CD4-positive, alpha-beta memory T cell (primary cell): ENCODE measurements at regions of chr10 and their contacts with region 1.

Region 1: GRCh38 chr10:8331883-8332729 is 277.6 kb downstream of the GATA3 start:
- DNase-seq: peak; percentile 94 to 97 (median 95)
- H3K4me3 ChIP-seq: peak overlapping the region; percentile 67
- H3K4me3 Mint-ChIP-seq: peak overlapping the region; percentile 84 to 94 (median 90)
- H3K27ac ChIP-seq: peak overlapping the region; percentile 78
- H3K27ac Mint-ChIP-seq: peak overlapping the region; percentile 91 to 99 (median 98)
- H3K4me1 ChIP-seq: peaks cover 32% of the 10 kb centered on the region
- H3K4me1 Mint-ChIP-seq: peaks cover 27 to 69% (median 42%) of the 10 kb centered on the region in 4 donors
- H3K27me3 ChIP-seq: no peaks in the 10 kb centered on the region
- H3K27me3 Mint-ChIP-seq: no peaks in the 10 kb centered on the region

Region 2: DNA sequence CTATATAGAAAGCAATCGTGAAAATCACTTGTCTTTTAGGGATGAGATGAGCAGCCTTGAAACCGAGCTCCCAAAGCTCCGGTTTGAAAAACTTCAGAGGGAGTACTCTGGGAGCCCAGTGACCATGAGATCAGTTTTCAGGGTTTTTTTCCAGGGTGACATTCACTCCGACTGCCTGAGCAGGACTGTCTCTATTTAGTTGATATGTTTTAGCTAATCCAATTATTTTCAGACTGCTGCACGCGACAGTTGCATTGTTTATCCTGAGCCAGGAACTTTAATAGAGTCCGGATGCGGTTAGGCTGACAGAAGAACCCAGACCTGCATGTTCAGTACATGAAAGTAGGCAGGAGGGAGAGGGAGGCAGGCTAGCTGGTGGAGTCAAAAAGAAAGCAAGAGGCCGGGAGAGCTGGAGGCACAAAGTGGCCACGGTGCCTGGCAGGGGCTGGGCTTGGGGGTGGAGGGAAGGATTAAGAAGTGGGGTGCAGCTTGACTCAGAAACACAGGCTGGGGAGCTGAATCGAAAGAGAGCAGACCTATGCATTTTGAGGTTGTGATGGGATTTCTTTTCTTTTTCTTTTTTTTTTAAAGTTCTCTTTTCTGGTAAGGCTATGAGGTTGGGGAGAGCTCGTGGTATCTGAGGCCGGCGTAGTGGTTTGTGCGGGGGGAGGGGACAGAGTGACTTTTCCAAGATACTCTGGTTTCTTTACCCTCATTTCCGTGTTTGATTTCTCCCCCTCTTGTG is 272.0 kb before region 1 on chr10:
- CTCF ChIA-PET with region 1: interaction called, 37 read pairs
- POLR2A ChIA-PET with region 1: interaction called, 145 read pairs
- intact Hi-C with region 1: no loop called
- DNase-seq: peak; percentile 73 to 84 (median 76)
- H3K4me3 ChIP-seq: peak overlapping the region; percentile 57 to 58
- H3K4me3 Mint-ChIP-seq: peak overlapping the region; percentile 94 to 100 (median 98)
- H3K27ac ChIP-seq: peak overlapping the region; percentile 83
- H3K27ac Mint-ChIP-seq: peak overlapping the region; percentile 93 to 99 (median 97)
- H3K4me1 ChIP-seq: peaks cover 77% of the 10 kb centered on the region
- H3K4me1 Mint-ChIP-seq: peaks cover 46 to 86% (median 70%) of the 10 kb centered on the region in 4 donors
- H3K27me3 ChIP-seq: no peaks in the 10 kb centered on the region
- H3K27me3 Mint-ChIP-seq: no peaks in the 10 kb centered on the region

Region 3: DNA sequence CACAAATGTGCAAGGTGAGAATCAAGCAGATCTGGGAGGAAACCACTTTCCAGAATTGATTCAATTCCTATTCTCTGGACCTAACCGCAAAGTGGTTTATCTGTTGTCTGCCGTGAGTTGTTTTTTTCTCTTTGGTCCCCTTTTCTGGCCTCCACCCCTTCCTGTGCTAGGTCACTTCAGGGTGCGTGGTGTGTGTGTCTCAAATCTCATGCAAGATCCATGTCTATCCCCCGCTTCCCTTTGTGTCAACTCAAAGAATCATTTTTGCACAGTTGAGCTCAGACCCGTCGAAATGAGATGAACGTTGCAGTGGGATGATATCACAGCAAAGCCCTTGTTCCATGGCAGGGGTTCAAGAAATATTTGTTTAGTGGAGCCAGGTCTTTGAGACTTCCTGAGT is 93.1 kb before region 1 on chr10:
- CTCF ChIA-PET with region 1: interaction called, 4 read pairs
- POLR2A ChIA-PET with region 1: interaction called, 15 read pairs
- intact Hi-C with region 1: no loop called
- DNase-seq: peak in 4 of 5 donors; percentile 13 to 33 (median 22)
- H3K4me3 ChIP-seq: peak overlapping the region in 1 of 2 donors; percentile 17
- H3K4me3 Mint-ChIP-seq: peak overlapping the region; percentile 39 to 79 (median 64)
- H3K27ac ChIP-seq: peak overlapping the region; percentile 13
- H3K27ac Mint-ChIP-seq: peak overlapping the region; percentile 44 to 89 (median 72)
- H3K4me1 ChIP-seq: peaks cover 48% of the 10 kb centered on the region
- H3K4me1 Mint-ChIP-seq: peaks cover 35 to 77% (median 56%) of the 10 kb centered on the region in 4 donors
- H3K27me3 ChIP-seq: no peaks in the 10 kb centered on the region
- H3K27me3 Mint-ChIP-seq: no peaks in the 10 kb centered on the region

Region 4: GRCh38 chr10:8365935-8366911 is 34.1 kb after region 1 on chr10:
- CTCF ChIA-PET with region 1: no interaction called
- POLR2A ChIA-PET with region 1: interaction called, 14 read pairs
- intact Hi-C with region 1: loop called (anchors 2 kb)
- DNase-seq: peak; percentile 60 to 86 (median 71)
- H3K4me3 ChIP-seq: no peak overlapping the region
- H3K4me3 Mint-ChIP-seq: peak overlapping the region; percentile 17 to 79 (median 55)
- H3K27ac ChIP-seq: peak overlapping the region; percentile 56
- H3K27ac Mint-ChIP-seq: peak overlapping the region; percentile 75 to 96 (median 92)
- H3K4me1 ChIP-seq: peaks cover 43% of the 10 kb centered on the region
- H3K4me1 Mint-ChIP-seq: peaks cover 44 to 67% (median 52%) of the 10 kb centered on the region in 4 donors
- H3K27me3 ChIP-seq: no peaks in the 10 kb centered on the region
- H3K27me3 Mint-ChIP-seq: no peaks in the 10 kb centered on the region

Region 5: DNA sequence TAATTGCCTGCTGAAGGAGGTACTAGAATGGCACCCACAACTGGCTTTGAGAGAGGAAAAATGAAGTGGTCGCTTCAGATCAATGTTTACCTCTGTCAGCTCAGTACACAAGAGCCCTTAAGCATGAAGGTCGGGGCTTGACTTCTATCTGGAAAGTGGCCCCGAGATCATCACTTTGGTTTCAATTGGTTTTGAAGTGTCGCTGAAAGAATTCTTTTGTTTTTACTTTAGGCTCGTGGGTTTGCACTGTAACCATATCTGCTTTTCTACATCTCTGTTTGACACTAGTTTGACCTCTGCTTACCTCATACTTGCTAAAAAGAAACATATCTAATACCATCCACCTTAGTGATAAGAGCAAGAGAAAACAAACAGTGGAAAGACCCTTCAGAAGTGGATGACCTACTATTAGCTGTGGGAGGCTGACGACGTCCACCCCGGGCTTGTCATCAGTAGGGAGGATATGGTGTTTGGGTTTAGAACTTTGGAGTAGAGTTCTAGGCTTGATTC is 84.1 kb after region 1 on chr10:
- CTCF ChIA-PET with region 1: interaction called, 5 read pairs
- POLR2A ChIA-PET with region 1: interaction called, 31 read pairs
- intact Hi-C with region 1: no loop called
- DNase-seq: peak; percentile 73 to 89 (median 84)
- H3K4me3 ChIP-seq: no peak overlapping the region
- H3K4me3 Mint-ChIP-seq: peak overlapping the region in 7 of 8 donors; percentile 7 to 81 (median 51)
- H3K27ac ChIP-seq: peak overlapping the region; percentile 90
- H3K27ac Mint-ChIP-seq: peak overlapping the region; percentile 97 to 100 (median 99)
- H3K4me1 ChIP-seq: peaks cover 31% of the 10 kb centered on the region
- H3K4me1 Mint-ChIP-seq: peaks cover 30 to 58% (median 39%) of the 10 kb centered on the region in 4 donors
- H3K27me3 ChIP-seq: no peaks in the 10 kb centered on the region
- H3K27me3 Mint-ChIP-seq: no peaks in the 10 kb centered on the region

Region 6: GRCh38 chr10:8444630-8445029 is 112.5 kb after region 1 on chr10:
- CTCF ChIA-PET with region 1: interaction called, 9 read pairs
- POLR2A ChIA-PET with region 1: interaction called, 11 read pairs
- intact Hi-C with region 1: no loop called
- DNase-seq: peak in 4 of 5 donors; percentile 21 to 35 (median 26)
- H3K4me3 ChIP-seq: no peak overlapping the region
- H3K4me3 Mint-ChIP-seq: no peak overlapping the region
- H3K27ac ChIP-seq: no peak overlapping the region
- H3K27ac Mint-ChIP-seq: peak overlapping the region in 3 of 7 donors; percentile 12 to 65 (median 24)
- H3K4me1 ChIP-seq: peaks cover 6% of the 10 kb centered on the region
- H3K4me1 Mint-ChIP-seq: peaks cover 5 to 19% (median 12%) of the 10 kb centered on the region in 4 donors
- H3K27me3 ChIP-seq: no peaks in the 10 kb centered on the region
- H3K27me3 Mint-ChIP-seq: no peaks in the 10 kb centered on the region

Region 7: DNA sequence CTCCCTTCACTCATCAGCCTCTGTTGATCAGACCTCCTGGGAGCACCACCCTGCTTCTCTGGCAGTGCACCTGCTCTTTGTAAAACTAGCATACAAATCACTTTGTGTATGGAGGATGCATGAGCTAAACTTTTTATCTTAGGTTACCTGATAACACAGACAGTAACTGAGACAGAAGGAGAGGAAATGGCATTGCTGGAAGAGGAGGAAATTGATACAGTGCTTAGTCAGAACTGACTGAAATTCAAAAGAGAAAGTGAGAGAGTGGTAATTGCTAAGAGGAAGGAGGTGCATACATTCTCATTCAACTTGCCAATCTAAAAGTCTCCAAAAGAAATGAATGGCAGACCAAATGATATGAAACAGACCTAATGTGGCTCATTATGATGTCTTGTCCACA is 843.1 kb after region 1 on chr10:
- CTCF ChIA-PET with region 1: no interaction called
- POLR2A ChIA-PET with region 1: no interaction called
- intact Hi-C with region 1: no loop called
- DNase-seq: peak in 2 of 5 donors; percentile 2
- H3K4me3 ChIP-seq: no peak overlapping the region
- H3K4me3 Mint-ChIP-seq: peak overlapping the region in 2 of 8 donors; percentile 20 to 37
- H3K27ac ChIP-seq: no peak overlapping the region
- H3K27ac Mint-ChIP-seq: peak overlapping the region in 3 of 7 donors; percentile 5 to 59 (median 49)
- H3K4me1 ChIP-seq: peaks cover 8% of the 10 kb centered on the region
- H3K4me1 Mint-ChIP-seq: peaks cover 0 to 13% (median 6%) of the 10 kb centered on the region in 4 donors
- H3K27me3 ChIP-seq: no peaks in the 10 kb centered on the region
- H3K27me3 Mint-ChIP-seq: peaks cover 0 to 4% of the 10 kb centered on the region in 2 donors